CD4-positive, alpha-beta T cell (primary cell): ENCODE measurements at regions of chr1 and their contacts with region 1.

Region 1: DNA sequence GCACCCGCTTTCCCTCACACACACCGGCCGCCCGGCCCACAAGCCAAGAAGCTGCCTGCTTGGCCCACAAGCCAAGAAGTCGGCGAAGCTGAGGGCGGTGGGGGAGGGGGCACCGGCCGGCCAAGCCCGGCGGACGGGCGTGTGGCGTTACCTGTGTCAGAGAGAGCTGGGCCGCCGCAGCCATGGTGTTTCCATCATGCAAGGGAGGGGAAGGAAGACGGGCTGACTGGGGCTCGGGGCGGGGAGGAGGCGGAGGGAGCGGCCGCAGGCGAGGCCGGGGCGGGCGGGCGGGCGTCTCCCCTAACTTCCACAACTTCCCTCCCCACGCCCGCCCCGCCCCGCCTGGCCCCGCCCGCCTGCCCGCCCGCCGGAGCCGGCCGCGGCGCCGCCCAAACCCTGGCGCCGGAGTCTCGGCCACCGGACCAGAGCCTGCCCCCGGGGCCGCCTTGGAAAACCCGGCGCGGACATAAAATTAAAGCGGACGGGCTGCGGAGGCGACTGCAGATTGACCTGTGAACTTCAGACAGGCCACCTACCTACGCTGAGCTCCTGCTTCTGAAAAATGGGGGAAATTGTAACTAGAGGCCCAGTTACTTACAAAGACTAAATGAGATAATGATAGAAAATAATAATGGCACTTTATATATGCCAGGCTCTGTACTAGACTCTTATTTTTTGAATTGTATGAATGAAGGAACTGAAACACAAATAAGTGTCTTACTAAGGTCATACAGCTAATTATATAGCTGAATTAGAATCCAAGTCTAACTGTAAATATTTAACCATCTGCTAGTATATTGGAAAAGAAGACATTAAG is at the start of gene EPS15:
- DNase-seq: peak; percentile 73 to 92 (median 82)
- ATAC-seq: peak; percentile 69
- H3K4me3 ChIP-seq: peak within 1 kb of the TSS; percentile 76
- H3K4me3 Mint-ChIP-seq: peak within 1 kb of the TSS; percentile 94
- H3K27ac ChIP-seq: peak within 1 kb of the TSS; percentile 48 to 50
- H3K27ac Mint-ChIP-seq: peak within 1 kb of the TSS; percentile 88
- H3K4me1 ChIP-seq: peaks cover 24% of the 10 kb centered on the region
- H3K4me1 Mint-ChIP-seq: peaks cover 59% of the 10 kb centered on the region
- H3K27me3 ChIP-seq: no peaks in the 10 kb centered on the region
- H3K27me3 Mint-ChIP-seq: no peaks in the 10 kb centered on the region
- CTCF ChIP-seq: no peak
- total RNA-seq, gene EPS15: 44.5 to 47.9 TPM

Region 2: DNA sequence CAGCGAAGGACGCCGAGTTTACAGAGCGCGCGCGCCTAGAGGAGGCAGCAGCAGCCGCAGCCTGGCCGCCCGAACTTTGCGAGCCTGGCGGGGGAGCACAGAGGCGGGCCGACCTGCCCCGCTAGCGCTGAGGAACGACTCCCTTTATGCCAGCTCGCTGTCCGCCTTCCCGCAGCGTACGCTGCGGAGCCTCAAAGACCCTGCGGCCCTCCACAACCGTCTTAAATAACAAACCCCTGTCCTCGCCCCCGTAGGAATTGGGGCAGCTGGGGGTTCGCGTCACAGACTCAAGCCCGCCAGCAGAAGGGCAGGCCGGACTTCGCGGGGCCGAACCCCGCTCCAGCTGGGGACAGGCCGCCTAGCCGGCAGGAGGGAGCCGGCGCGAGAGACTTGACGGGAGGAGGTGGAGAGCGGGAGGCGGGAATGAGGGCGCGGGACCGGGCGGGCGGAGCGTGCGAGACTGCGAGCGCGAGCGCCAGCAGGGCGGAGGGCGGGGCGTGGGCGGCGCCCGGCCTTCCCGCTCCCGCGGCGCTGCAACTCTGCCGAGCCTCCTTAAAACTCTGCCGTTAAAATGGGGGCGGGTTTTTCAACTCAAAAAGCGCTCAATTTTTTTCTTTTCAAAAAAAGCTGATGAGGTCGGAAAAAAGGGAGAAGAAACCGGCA is 551.0 kb before region 1 on chr1:
- CTCF ChIA-PET with region 1: no interaction called
- POLR2A ChIA-PET with region 1: interaction called, 3 read pairs
- intact Hi-C with region 1: loop called in 1 of 2 experiments (anchors 10 kb)
- DNase-seq: peak; percentile 59 to 94 (median 76)
- ATAC-seq: peak; percentile 80
- H3K4me3 ChIP-seq: peak overlapping the region; percentile 90
- H3K4me3 Mint-ChIP-seq: peak overlapping the region; percentile 100
- H3K27ac ChIP-seq: peak overlapping the region; percentile 82 to 89
- H3K27ac Mint-ChIP-seq: peak overlapping the region; percentile 89
- H3K4me1 ChIP-seq: peaks cover 19% of the 10 kb centered on the region
- H3K4me1 Mint-ChIP-seq: peaks cover 26% of the 10 kb centered on the region
- H3K27me3 ChIP-seq: no peaks in the 10 kb centered on the region
- H3K27me3 Mint-ChIP-seq: no peaks in the 10 kb centered on the region
- CTCF ChIP-seq: peak; percentile 39

Region 3: DNA sequence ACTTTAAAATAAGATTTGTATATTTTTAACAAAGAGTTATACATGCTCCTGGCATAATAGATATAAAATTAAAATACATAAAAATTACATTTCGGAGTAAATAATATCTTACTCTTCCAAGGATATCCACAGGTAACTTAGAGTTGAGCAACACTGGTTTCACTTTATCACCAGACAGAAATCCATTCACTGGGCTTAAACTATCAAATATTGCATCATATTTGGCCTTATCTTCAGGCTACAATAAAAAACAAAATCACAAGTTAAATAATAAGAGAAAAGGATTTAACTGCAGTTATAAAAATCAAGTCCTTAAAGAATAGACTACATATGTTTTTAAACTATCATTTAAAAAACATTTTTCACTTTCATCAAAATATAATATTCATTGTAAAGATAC is 55.7 kb before region 1 on chr1:
- CTCF ChIA-PET with region 1: no interaction called
- POLR2A ChIA-PET with region 1: no interaction called
- intact Hi-C with region 1: loop called in 1 of 2 experiments (anchors 10 kb)
- DNase-seq: no peak
- ATAC-seq: no peak
- H3K4me3 ChIP-seq: no peak overlapping the region
- H3K4me3 Mint-ChIP-seq: no peak overlapping the region
- H3K27ac ChIP-seq: no peak overlapping the region
- H3K27ac Mint-ChIP-seq: no peak overlapping the region
- H3K4me1 ChIP-seq: no peaks in the 10 kb centered on the region
- H3K4me1 Mint-ChIP-seq: no peaks in the 10 kb centered on the region
- H3K27me3 ChIP-seq: no peaks in the 10 kb centered on the region
- H3K27me3 Mint-ChIP-seq: no peaks in the 10 kb centered on the region
- CTCF ChIP-seq: no peak

Region 4: DNA sequence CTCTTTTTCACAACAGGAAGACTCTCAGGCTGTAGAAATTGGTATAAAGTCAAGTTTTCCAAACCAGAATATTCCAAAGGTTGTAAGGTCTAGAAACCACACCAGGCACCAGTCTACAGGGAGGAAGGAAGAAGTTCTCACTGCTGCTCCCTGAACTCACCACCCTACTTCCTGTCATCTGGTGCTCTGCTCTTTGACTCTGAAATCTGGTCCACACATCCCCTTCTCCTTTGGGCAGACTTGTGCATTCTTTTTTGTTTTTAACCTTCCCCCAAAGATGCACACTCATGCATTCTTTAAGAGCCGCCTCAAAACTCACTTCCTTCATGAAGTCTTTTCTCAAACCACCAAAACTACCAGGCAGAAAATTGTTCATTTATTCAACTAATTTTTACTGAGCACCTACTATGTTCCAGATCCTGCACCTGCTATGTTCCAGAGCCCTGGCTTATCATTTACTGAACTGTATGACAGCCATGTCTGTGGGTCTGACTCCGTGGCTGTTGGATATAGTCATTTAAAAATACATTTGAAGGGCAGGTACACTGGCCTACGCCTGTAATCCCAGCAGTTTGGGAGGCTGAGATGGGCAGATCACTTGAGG is 29.9 kb after region 1 on chr1:
- CTCF ChIA-PET with region 1: no interaction called
- POLR2A ChIA-PET with region 1: no interaction called
- intact Hi-C with region 1: no loop called
- DNase-seq: peak in 4 of 14 experiments; percentile 14 to 26 (median 23)
- ATAC-seq: no peak
- H3K4me3 ChIP-seq: no peak overlapping the region
- H3K4me3 Mint-ChIP-seq: no peak overlapping the region
- H3K27ac ChIP-seq: no peak overlapping the region
- H3K27ac Mint-ChIP-seq: peak overlapping the region; percentile 8
- H3K4me1 ChIP-seq: peaks cover 14% of the 10 kb centered on the region
- H3K4me1 Mint-ChIP-seq: peaks cover 13% of the 10 kb centered on the region
- H3K27me3 ChIP-seq: no peaks in the 10 kb centered on the region
- H3K27me3 Mint-ChIP-seq: no peaks in the 10 kb centered on the region
- CTCF ChIP-seq: no peak

Region 5: GRCh38 chr1:51616901-51617708 is 97.8 kb after region 1 on chr1 and contains the start of gene OSBPL9:
- CTCF ChIA-PET with region 1: no interaction called
- POLR2A ChIA-PET with region 1: interaction called, 8 read pairs
- intact Hi-C with region 1: loop called (anchors 1 to 5 kb)
- DNase-seq: peak; percentile 80 to 98 (median 85)
- ATAC-seq: peak; percentile 90
- H3K4me3 ChIP-seq: peak within 1 kb of the TSS; percentile 97
- H3K4me3 Mint-ChIP-seq: peak within 1 kb of the TSS; percentile 99
- H3K27ac ChIP-seq: peak within 1 kb of the TSS; percentile 61 to 73
- H3K27ac Mint-ChIP-seq: peak within 1 kb of the TSS; percentile 95
- H3K4me1 ChIP-seq: peaks cover 17% of the 10 kb centered on the region
- H3K4me1 Mint-ChIP-seq: peaks cover 47% of the 10 kb centered on the region
- H3K27me3 ChIP-seq: no peaks in the 10 kb centered on the region
- H3K27me3 Mint-ChIP-seq: no peaks in the 10 kb centered on the region
- CTCF ChIP-seq: no peak
- total RNA-seq, gene OSBPL9: 35.6 to 36.5 TPM

Region 6: DNA sequence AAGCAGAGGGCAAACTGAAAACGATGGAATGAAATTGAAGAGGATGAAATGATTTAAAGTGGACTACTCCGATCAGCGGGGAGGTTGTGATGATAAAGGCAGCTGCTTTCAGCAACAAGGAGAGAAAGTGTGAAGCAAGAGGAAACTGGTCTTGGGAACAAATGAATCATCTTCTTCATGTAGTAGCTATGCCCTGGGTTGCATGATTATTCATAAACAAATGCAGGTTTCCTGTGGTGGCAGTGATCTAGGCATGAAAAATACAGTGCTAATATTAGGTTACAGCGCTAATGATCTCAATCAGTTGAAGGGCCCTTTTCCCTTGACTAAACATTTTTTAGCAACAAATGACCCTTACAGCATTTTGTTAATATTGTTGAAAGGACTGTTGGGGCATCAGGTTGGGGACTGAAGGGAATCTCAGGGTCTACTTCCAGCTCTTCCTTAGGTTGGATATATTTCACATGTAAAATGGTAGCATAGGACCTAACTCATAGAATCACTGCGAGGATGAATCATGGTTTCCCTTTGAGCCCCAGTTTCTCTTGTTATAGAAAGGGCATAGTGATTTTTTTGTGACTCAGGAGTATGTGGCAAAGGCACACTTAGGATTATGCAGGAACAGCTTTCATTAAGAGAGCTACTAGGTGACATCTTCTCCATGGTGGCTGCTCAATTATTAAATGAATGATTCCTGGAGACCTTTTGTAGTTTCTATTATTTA is 620.7 kb after region 1 on chr1:
- CTCF ChIA-PET with region 1: no interaction called
- POLR2A ChIA-PET with region 1: no interaction called
- intact Hi-C with region 1: no loop called
- DNase-seq: peak in 4 of 14 experiments; percentile 32 to 64 (median 56)
- ATAC-seq: peak; percentile 30
- H3K4me3 ChIP-seq: peak overlapping the region; percentile 15
- H3K4me3 Mint-ChIP-seq: peak overlapping the region; percentile 94
- H3K27ac ChIP-seq: no peak overlapping the region
- H3K27ac Mint-ChIP-seq: peak overlapping the region; percentile 85
- H3K4me1 ChIP-seq: peaks cover 23% of the 10 kb centered on the region
- H3K4me1 Mint-ChIP-seq: peaks cover 32% of the 10 kb centered on the region
- H3K27me3 ChIP-seq: no peaks in the 10 kb centered on the region
- H3K27me3 Mint-ChIP-seq: no peaks in the 10 kb centered on the region
- CTCF ChIP-seq: no peak